ENCODE measurements at regions of chr2 and their contacts with region 1.

Region 1: DNA sequence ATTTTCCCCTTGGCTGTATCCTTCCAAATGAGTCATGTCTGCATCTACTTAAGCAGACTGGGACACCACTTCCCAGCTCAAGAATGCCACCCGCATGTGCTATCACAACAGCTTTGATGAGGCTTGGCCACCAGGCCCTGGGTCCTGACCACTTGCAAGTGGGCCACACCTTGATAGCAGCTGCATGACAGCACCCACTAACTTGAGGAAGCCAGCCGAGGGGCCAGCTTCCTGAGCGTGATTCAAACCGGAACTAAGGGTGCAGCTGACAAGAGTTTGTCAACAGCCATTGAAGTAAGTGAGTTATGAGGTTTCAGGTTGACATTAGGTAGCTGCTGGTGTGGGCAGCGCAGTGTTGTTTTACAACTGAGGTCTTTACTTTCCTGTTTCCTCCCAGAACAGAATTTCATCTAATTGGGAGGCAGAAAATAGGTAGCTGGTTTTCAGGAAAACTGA is 54.4 kb downstream of the EPHA4 start:
- DNase-seq: peak; percentile 57 to 92 (median 74)
- ATAC-seq: peak; percentile 65
- H3K4me3 ChIP-seq: peak overlapping the region; percentile 45
- H3K4me3 Mint-ChIP-seq: no peak overlapping the region
- H3K27ac ChIP-seq: peak overlapping the region; percentile 87 to 92
- H3K27ac Mint-ChIP-seq: no peak overlapping the region
- H3K4me1 ChIP-seq: peaks cover 60% of the 10 kb centered on the region
- H3K4me1 Mint-ChIP-seq: peaks cover 5% of the 10 kb centered on the region
- H3K27me3 ChIP-seq: no peaks in the 10 kb centered on the region
- H3K27me3 Mint-ChIP-seq: no peaks in the 10 kb centered on the region
- CTCF ChIP-seq: no peak

Region 2: GRCh38 chr2:220687231-220687843 is 830.4 kb before region 1 on chr2:
- CTCF ChIA-PET with region 1: no interaction called
- POLR2A ChIA-PET with region 1: no interaction called
- intact Hi-C with region 1: loop called in 1 of 2 experiments (anchors 5 kb)
- DNase-seq: peak; percentile 28 to 73 (median 50)
- ATAC-seq: peak; percentile 89
- H3K4me3 ChIP-seq: no peak overlapping the region
- H3K4me3 Mint-ChIP-seq: no peak overlapping the region
- H3K27ac ChIP-seq: no peak overlapping the region
- H3K27ac Mint-ChIP-seq: no peak overlapping the region
- H3K4me1 ChIP-seq: no peaks in the 10 kb centered on the region
- H3K4me1 Mint-ChIP-seq: no peaks in the 10 kb centered on the region
- H3K27me3 ChIP-seq: no peaks in the 10 kb centered on the region
- H3K27me3 Mint-ChIP-seq: peaks cover 36% of the 10 kb centered on the region
- CTCF ChIP-seq: peak; percentile 89

Region 3: GRCh38 chr2:221372159-221372884 is 145.4 kb before region 1 on chr2:
- CTCF ChIA-PET with region 1: no interaction called
- POLR2A ChIA-PET with region 1: no interaction called
- intact Hi-C with region 1: no loop called
- DNase-seq: no peak
- ATAC-seq: no peak
- H3K4me3 ChIP-seq: no peak overlapping the region
- H3K4me3 Mint-ChIP-seq: no peak overlapping the region
- H3K27ac ChIP-seq: no peak overlapping the region
- H3K27ac Mint-ChIP-seq: no peak overlapping the region
- H3K4me1 ChIP-seq: no peaks in the 10 kb centered on the region
- H3K4me1 Mint-ChIP-seq: no peaks in the 10 kb centered on the region
- H3K27me3 ChIP-seq: no peaks in the 10 kb centered on the region
- H3K27me3 Mint-ChIP-seq: peaks cover 6% of the 10 kb centered on the region
- CTCF ChIP-seq: no peak

Region 4: DNA sequence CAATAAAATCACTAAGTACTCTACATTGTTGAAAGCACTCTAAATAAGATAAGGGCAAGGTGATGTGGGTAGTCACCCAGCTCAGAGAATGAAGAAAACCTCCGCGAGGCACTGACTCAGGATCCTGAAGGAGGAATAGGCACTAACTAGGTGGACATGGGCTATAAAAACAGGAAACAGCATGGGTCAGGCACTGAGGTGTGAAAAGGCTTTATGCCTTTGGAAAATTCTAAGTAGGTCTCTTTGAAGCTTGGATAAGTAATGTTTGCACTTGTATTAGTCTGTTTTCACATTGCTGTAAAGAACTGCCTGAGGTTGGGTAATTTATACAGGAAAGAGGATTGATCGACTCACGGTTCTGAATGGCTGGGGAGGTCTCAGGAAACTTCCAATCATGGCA is 107.2 kb before region 1 on chr2:
- CTCF ChIA-PET with region 1: no interaction called
- POLR2A ChIA-PET with region 1: no interaction called
- intact Hi-C with region 1: no loop called
- DNase-seq: no peak
- ATAC-seq: no peak
- H3K4me3 ChIP-seq: no peak overlapping the region
- H3K4me3 Mint-ChIP-seq: no peak overlapping the region
- H3K27ac ChIP-seq: no peak overlapping the region
- H3K27ac Mint-ChIP-seq: no peak overlapping the region
- H3K4me1 ChIP-seq: no peaks in the 10 kb centered on the region
- H3K4me1 Mint-ChIP-seq: no peaks in the 10 kb centered on the region
- H3K27me3 ChIP-seq: no peaks in the 10 kb centered on the region
- H3K27me3 Mint-ChIP-seq: no peaks in the 10 kb centered on the region
- CTCF ChIP-seq: no peak

Region 5: GRCh38 chr2:221465776-221466175 is 51.9 kb before region 1 on chr2:
- CTCF ChIA-PET with region 1: no interaction called
- POLR2A ChIA-PET with region 1: interaction called, 27 read pairs
- intact Hi-C with region 1: loop called in 1 of 2 experiments (anchors 10 kb)
- DNase-seq: peak in 4 of 14 experiments; percentile 3 to 32 (median 25)
- ATAC-seq: no peak
- H3K4me3 ChIP-seq: no peak overlapping the region
- H3K4me3 Mint-ChIP-seq: peak overlapping the region; percentile 31
- H3K27ac ChIP-seq: no peak overlapping the region
- H3K27ac Mint-ChIP-seq: peak overlapping the region; percentile 11
- H3K4me1 ChIP-seq: peaks cover 19% of the 10 kb centered on the region
- H3K4me1 Mint-ChIP-seq: peaks cover 71% of the 10 kb centered on the region
- H3K27me3 ChIP-seq: no peaks in the 10 kb centered on the region
- H3K27me3 Mint-ChIP-seq: no peaks in the 10 kb centered on the region
- CTCF ChIP-seq: no peak

Region 6: DNA sequence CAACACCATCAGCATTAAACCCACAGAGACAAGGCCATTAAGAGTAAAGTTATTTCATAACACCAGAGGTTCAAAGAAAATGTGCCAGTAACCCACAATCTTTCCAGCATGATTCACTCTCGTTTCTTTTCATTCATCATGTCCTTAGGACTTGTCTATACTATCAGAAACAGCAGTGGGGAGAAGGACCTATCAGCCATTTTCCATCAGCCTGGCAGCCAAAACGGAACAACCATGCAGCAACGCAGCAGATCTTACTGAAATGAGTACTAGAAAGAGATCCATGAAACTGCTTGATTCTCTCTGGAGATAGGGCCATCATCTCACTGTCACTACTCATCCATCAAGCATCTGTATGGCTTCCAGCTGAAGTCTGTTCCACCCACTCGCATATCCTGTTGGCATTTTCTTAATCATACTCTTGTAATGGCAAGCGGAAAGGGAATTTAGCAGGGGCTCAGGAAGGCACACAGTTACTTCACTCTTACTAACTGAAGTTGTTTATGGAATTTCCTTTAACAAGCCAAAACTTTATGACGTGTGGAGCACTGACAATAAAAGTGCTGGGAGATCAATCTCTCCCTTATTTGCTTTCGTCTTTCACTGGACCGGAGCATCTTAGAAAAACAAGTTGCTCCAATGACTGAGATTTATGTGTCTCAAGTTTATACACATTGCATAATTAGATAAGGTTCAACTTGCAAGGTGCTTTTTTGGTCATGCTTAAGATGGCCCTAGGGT is 15.3 kb before region 1 on chr2:
- CTCF ChIA-PET with region 1: interaction called, 6 read pairs
- POLR2A ChIA-PET with region 1: interaction called, 24 read pairs
- intact Hi-C with region 1: no loop called
- DNase-seq: no peak
- ATAC-seq: no peak
- H3K4me3 ChIP-seq: no peak overlapping the region
- H3K4me3 Mint-ChIP-seq: no peak overlapping the region
- H3K27ac ChIP-seq: no peak overlapping the region
- H3K27ac Mint-ChIP-seq: no peak overlapping the region
- H3K4me1 ChIP-seq: peaks cover 4% of the 10 kb centered on the region
- H3K4me1 Mint-ChIP-seq: peaks cover 36% of the 10 kb centered on the region
- H3K27me3 ChIP-seq: no peaks in the 10 kb centered on the region
- H3K27me3 Mint-ChIP-seq: no peaks in the 10 kb centered on the region
- CTCF ChIP-seq: no peak

Region 7: GRCh38 chr2:221529943-221530652 is 12.4 kb after region 1 on chr2:
- CTCF ChIA-PET with region 1: interaction called, 3 read pairs
- POLR2A ChIA-PET with region 1: interaction called, 64 read pairs
- intact Hi-C with region 1: loop called in 1 of 2 experiments (anchors 1 kb)
- DNase-seq: peak in 4 of 14 experiments; percentile 21 to 54 (median 50)
- ATAC-seq: peak; percentile 74
- H3K4me3 ChIP-seq: peak overlapping the region; percentile 31
- H3K4me3 Mint-ChIP-seq: peak overlapping the region; percentile 47
- H3K27ac ChIP-seq: peak overlapping the region; percentile 8 to 65
- H3K27ac Mint-ChIP-seq: peak overlapping the region; percentile 91
- H3K4me1 ChIP-seq: peaks cover 48% of the 10 kb centered on the region
- H3K4me1 Mint-ChIP-seq: peaks cover 80% of the 10 kb centered on the region
- H3K27me3 ChIP-seq: no peaks in the 10 kb centered on the region
- H3K27me3 Mint-ChIP-seq: no peaks in the 10 kb centered on the region
- CTCF ChIP-seq: no peak

Region 8: GRCh38 chr2:221554769-221555493 is 37.2 kb after region 1 on chr2:
- CTCF ChIA-PET with region 1: interaction called, 3 read pairs
- POLR2A ChIA-PET with region 1: interaction called, 26 read pairs
- intact Hi-C with region 1: loop called in 1 of 2 experiments (anchors 5 kb)
- DNase-seq: peak in 3 of 14 experiments; percentile 23 to 35 (median 28)
- ATAC-seq: peak; percentile 48
- H3K4me3 ChIP-seq: no peak overlapping the region
- H3K4me3 Mint-ChIP-seq: peak overlapping the region; percentile 49
- H3K27ac ChIP-seq: no peak overlapping the region
- H3K27ac Mint-ChIP-seq: peak overlapping the region; percentile 52
- H3K4me1 ChIP-seq: peaks cover 13% of the 10 kb centered on the region
- H3K4me1 Mint-ChIP-seq: peaks cover 70% of the 10 kb centered on the region
- H3K27me3 ChIP-seq: no peaks in the 10 kb centered on the region
- H3K27me3 Mint-ChIP-seq: no peaks in the 10 kb centered on the region
- CTCF ChIP-seq: no peak